Activated CD4-positive, alpha-beta T cell treated with anti-CD3 and anti-CD28 coated beads, Interleukin-2, amount 10 ng/mL, durations not matched to agents 24 days and 14 days (primary cell): ENCODE measurements at regions of chr11 and their contacts with region 1.

Region 1: DNA sequence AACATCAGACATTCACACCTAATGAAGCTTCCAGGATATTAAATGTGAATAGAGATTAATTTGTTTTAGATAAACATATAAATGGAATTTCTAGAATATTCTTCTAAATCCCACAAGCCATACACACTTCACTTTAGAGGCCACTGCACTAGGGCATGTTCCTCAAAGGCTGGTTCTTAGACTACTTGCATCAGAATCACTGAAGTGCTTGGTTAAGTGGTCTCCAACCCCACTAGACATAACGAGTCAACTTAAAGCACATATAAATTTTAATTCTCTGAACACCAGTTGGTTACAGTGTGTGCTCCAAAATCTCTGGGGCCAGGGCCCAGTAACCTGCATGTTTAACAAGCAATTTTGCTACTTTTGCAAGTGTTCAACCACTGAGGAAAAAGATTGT is 7.9 kb upstream of the ALKBH8 start:
- DNase-seq: no peak
- H3K4me3 Mint-ChIP-seq: no peak overlapping the region
- H3K27ac Mint-ChIP-seq: no peak overlapping the region
- H3K4me1 Mint-ChIP-seq: no peaks in the 10 kb centered on the region
- H3K27me3 Mint-ChIP-seq: peaks cover 8% of the 10 kb centered on the region

Region 2: DNA sequence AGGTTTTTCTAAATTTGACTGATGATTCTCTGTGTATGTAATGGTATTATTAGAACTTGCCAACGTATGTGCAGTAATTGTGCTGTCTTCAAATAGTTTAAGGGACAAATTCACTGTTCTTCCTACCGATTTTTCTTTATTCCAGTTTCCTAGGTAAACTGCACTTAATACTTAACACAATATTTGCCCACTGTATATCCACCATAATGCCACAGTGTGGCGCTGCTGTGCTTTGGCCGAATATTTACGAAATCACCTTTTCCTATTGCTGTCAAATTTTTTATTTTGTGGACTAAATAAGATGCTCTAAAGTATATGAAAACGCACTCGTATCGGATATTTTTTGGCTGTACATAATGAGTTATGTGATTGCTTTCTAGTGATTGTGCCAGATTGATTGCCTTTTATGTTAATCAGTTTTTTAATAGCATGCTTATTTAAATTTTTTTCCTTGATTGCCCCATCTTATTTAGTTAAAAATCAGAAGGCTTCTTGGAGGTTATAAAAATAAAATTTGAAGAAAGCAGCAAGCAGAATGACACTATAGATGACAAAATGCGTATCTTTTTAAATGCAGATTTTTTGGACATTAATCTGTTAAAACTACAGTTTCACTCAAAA is 1485.5 kb before region 1 on chr11:
- intact Hi-C with region 1: loop called (anchors 10 kb)
- DNase-seq: peak; percentile 76
- H3K4me3 Mint-ChIP-seq: no peak overlapping the region
- H3K27ac Mint-ChIP-seq: no peak overlapping the region
- H3K4me1 Mint-ChIP-seq: peaks cover 37% of the 10 kb centered on the region
- H3K27me3 Mint-ChIP-seq: no peaks in the 10 kb centered on the region

Region 3: GRCh38 chr11:107549253-107549953 is 24.0 kb before region 1 on chr11:
- intact Hi-C with region 1: loop called (anchors 1 kb)
- DNase-seq: peak; percentile 79
- H3K4me3 Mint-ChIP-seq: no peak overlapping the region
- H3K27ac Mint-ChIP-seq: no peak overlapping the region
- H3K4me1 Mint-ChIP-seq: peaks cover 11% of the 10 kb centered on the region
- H3K27me3 Mint-ChIP-seq: no peaks in the 10 kb centered on the region

Region 4: DNA sequence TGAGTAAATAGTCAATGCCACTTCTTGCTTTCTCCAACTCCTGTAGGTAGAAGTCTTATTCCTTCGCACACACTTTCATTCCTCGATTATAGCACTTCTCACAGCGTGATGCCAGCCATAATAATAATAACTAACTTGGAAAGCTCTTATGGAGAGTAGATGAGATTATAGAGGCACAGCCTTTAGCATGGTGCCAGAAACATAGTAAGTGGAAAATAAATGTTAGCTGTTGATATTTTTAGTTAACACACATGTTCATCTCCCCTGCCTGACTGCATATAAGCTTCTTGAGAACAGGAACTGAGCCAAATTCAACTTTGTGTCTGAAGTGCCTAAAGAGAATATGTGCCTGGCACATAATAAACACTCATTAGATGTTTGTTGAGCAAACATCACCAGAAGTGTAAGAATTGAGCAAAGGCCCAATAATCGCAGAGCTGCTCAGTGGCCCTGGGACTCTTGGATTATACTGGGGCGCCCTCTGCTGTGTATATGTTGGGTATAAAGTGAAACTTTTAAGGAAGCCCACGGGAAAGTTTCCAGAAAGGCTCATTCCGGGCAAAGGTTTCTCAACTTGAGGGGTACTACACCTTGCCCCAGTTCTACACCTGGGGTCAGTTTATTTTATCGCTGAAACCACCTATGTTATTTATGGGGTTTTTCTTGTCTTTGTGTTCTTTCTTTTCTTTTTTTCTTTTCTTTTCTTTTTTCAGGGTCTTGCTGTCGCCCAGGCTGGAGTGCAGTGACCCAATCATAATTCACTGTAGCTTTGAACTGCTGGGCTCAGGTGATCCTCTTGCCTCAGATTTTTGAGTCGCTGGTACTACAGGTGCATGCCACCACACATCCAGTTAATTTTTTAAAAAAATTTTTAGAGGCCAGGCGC is 116.1 kb after region 1 on chr11:
- intact Hi-C with region 1: loop called (anchors 1 kb)
- DNase-seq: peak; percentile 88
- H3K4me3 Mint-ChIP-seq: no peak overlapping the region
- H3K27ac Mint-ChIP-seq: no peak overlapping the region
- H3K4me1 Mint-ChIP-seq: no peaks in the 10 kb centered on the region
- H3K27me3 Mint-ChIP-seq: peaks cover 9% of the 10 kb centered on the region

Region 5: DNA sequence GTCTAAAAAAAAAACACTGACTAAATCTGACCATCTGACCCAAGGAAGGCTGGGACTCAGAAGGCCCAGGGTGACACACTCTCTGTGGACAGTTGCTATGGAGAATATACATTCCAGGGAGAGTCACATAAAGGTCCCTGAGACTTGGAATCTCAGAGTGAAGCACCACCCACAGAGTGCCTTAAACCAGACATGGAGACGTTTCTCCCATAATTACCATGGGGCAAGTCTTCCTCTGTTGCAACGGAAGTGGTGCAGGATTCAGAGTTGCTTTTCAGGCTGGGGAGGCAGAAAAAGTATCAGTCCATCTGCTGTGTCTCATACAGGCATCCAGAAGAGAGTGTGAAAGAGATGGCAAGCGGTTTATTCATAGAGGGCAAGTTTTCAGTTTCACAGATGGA is 197.1 kb after region 1 on chr11:
- intact Hi-C with region 1: loop called (anchors 1 kb)
- DNase-seq: no peak
- H3K4me3 Mint-ChIP-seq: no peak overlapping the region
- H3K27ac Mint-ChIP-seq: no peak overlapping the region
- H3K4me1 Mint-ChIP-seq: peaks cover 3% of the 10 kb centered on the region
- H3K27me3 Mint-ChIP-seq: peaks cover 25% of the 10 kb centered on the region